Ascending aorta (tissue), 2 donors: ENCODE measurements at regions of chr2 and their contacts with region 1.

Region 1: GRCh38 chr2:44244129-44244871 is 31.0 kb upstream of the SLC3A1 start:
- DNase-seq: peak in 1 of 2 donors; percentile 78
- H3K4me3 ChIP-seq: peak overlapping the region; percentile 48 to 60
- H3K27ac ChIP-seq: no peak overlapping the region
- H3K4me1 ChIP-seq: peaks cover 0 to 3% of the 10 kb centered on the region in 2 donors
- H3K27me3 ChIP-seq: no peaks in the 10 kb centered on the region
- CTCF ChIP-seq: peak; percentile 23 to 77 (median 56)

Region 2: GRCh38 chr2:44087036-44087713 is 157.1 kb before region 1 on chr2:
- intact Hi-C with region 1: loop called (anchors 2 kb)
- DNase-seq: peak; percentile 49 to 92
- H3K4me3 ChIP-seq: peak overlapping the region; percentile 18 to 60
- H3K27ac ChIP-seq: peak overlapping the region; percentile 66 to 70
- H3K4me1 ChIP-seq: peaks cover 0 to 11% of the 10 kb centered on the region in 2 donors
- H3K27me3 ChIP-seq: no peaks in the 10 kb centered on the region
- CTCF ChIP-seq: peak; percentile 90 to 97 (median 96)

Region 3: GRCh38 chr2:44218771-44219170 is 25.5 kb before region 1 on chr2:
- intact Hi-C with region 1: no loop called
- DNase-seq: no peak
- H3K4me3 ChIP-seq: no peak overlapping the region
- H3K27ac ChIP-seq: no peak overlapping the region
- H3K4me1 ChIP-seq: no peaks in the 10 kb centered on the region
- H3K27me3 ChIP-seq: no peaks in the 10 kb centered on the region
- CTCF ChIP-seq: no peak

Region 4: DNA sequence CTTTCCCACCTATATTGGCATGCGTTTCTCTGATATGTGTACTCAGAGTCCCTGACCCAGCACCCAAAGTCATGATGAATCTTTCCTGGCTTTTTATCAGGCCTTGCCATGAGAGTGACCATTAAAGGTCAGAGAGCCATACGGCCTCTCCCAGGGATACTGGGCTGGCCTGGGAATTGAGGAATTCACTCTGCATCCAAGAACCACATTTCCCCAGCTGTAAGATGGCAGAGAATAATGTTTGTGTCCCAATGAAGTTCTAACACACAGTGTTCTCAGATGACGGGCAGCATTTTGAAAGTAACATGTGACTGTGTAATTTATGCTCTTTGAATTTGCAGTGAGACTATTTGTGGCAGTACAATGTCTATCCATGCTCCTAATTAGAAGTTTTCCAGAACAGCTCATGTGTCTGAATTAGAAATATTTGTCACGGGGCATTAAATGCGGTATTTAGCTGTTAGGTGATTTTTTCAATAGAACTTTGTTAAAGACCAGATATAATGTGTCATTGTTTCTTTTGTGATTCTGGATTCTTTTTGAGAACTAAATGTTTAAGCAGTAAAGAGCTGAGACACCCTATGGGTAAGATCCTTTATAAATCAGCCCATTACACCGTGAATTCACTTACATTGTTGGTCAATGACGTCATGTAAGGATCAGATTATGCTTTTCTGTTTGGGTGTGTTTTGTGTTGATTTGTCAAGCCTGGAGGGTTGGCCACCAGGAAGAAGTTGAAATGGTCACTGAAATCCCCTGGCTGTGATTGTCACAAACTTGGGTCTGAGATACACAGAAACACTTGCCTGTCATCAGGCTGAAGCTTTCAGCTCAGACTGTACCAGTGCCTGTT is 23.7 kb after region 1 on chr2:
- intact Hi-C with region 1: loop called (anchors 2 kb)
- DNase-seq: peak; percentile 14 to 88
- H3K4me3 ChIP-seq: no peak overlapping the region
- H3K27ac ChIP-seq: peak overlapping the region; percentile 81 to 92
- H3K4me1 ChIP-seq: peaks cover 9 to 42% of the 10 kb centered on the region in 2 donors
- H3K27me3 ChIP-seq: no peaks in the 10 kb centered on the region
- CTCF ChIP-seq: no peak

Region 5: DNA sequence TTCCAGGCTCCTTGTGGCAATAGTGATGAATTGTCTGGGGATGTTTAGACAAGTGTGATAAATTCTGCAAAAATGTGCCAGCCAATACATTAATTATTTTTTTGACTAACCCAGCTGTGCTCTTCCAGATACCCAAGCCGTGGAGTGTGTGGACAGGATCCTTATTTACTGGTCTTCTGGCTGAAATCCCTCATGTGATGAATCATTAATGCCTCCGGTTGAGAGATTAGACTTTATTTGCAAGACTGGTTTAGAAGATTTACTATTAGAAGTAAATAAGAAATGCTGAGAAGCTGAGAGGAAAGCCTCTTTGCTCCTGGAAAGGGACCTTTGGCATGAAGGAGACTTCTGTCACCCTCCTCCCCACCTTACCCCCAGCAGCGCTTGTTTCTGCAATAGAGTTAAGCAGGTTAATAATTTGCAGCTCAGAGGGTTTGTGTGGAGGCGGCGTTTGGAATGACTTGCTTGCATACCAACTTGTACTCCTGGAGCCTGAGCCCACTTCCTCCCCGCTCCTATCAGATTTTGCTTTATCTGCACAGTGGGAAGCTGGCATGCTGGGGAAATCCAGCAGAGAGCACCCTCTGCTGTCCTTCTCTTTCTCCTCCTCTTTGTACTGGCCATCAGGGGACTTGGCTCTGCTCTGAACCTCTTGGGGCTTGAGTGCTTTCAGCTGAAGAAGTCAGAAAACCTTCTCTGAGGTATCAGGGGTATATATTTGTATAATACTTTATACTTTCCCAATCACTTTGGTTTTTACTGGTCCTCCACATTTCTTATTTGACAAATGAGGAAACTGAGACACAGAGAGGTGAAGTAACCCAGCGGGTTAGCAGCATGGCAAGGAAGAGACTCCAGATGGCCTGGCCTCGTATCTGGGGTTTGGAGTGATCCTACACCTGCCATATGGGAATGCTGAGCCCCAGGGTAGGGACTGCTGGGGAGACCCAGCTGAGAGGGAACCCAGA is 47.3 kb after region 1 on chr2:
- intact Hi-C with region 1: loop called (anchors 2 kb)
- DNase-seq: peak in 1 of 2 donors; percentile 78
- H3K4me3 ChIP-seq: peak overlapping the region in 1 of 2 donors; percentile 16
- H3K27ac ChIP-seq: peak overlapping the region; percentile 19 to 61
- H3K4me1 ChIP-seq: peaks cover 0 to 34% of the 10 kb centered on the region in 2 donors
- H3K27me3 ChIP-seq: no peaks in the 10 kb centered on the region
- CTCF ChIP-seq: peak; percentile 46 to 70 (median 50)

Region 6: DNA sequence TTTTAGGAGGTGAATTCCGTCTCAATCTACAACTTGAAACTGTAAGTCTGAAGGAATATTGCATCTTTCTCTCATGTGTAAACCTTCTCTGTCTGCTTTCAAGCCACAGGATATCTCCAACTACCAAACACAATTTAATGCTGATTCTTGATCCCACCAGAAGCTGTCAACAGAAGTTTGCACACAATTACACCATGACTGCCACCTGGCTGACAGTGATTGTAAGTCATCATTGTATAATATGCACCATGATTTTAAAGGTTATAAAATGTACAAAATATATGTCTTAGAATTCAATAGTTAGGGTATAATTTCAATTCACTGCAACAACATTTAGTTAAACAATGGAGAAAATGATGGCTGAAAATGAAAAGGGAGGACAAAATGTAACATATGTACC is 98.6 kb after region 1 on chr2:
- intact Hi-C with region 1: loop called (anchors 5 kb)
- DNase-seq: no peak
- H3K4me3 ChIP-seq: no peak overlapping the region
- H3K27ac ChIP-seq: no peak overlapping the region
- H3K4me1 ChIP-seq: peaks cover 0 to 12% of the 10 kb centered on the region in 2 donors
- H3K27me3 ChIP-seq: no peaks in the 10 kb centered on the region
- CTCF ChIP-seq: peak in 1 of 3 experiments; percentile 29